ENCODE measurements at regions of chr7 and their contacts with region 1.

Region 1: DNA sequence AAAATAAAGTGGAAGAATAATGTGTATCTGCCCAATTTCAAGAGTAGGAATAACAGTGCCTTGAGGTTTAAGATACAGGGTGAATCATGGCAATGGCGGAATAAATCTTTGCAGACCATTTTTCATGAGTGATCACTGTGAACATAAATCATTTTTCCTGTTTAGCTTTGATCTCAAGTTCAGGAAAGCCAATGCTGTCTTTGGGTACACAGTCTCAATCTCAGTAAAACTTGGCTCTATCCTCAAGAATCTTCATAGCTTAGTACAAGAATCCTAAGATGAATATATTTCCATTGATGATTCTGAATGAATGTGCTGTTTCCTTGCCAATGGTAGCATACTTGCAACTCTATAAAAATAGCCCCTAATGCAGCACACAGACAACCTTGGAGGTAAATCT is 6.8 kb downstream of the NAMPT start:
- DNase-seq: no peak
- H3K4me3 ChIP-seq: no peak overlapping the region
- H3K27ac ChIP-seq: no peak overlapping the region
- H3K4me1 ChIP-seq: no peaks in the 10 kb centered on the region
- H3K27me3 ChIP-seq: no peaks in the 10 kb centered on the region
- CTCF ChIP-seq: no peak
- POLR2A ChIP-seq: no peak

Region 2: DNA sequence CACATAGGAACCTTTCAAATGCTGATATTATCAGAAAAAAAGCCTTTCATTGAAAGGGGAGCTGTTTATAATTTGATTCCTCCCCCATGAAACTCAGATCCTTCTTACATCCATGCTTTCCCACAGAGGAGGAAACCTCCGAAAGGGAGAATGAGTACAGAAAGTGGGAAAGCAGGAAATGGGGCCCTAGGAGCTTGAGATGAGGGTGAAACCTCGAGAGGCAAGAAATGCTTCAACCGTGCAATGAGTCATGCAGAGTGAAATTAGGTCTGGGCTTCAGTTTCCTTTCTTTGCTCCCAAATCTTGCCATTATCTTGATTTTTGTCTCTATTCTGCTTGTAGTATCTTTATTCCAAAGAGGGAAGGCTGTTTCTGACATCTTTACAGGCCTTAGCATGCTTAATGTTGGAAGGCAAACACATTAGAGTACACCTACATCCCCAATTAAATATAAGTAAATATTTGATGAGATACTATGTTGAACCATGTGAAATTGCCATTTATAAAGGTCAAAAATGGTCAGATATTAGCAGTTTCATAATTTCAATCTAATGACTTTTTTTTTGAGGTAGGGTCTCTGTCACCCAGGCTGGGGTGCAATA is 72.3 kb before region 1 on chr7:
- intact Hi-C with region 1: loop called (anchors 2 kb)
- DNase-seq: no peak
- H3K4me3 ChIP-seq: no peak overlapping the region
- H3K27ac ChIP-seq: no peak overlapping the region
- H3K4me1 ChIP-seq: no peaks in the 10 kb centered on the region
- H3K27me3 ChIP-seq: no peaks in the 10 kb centered on the region
- CTCF ChIP-seq: no peak
- POLR2A ChIP-seq: no peak

Measured in breast epithelium (tissue), 4 donors.